ENCODE measurements at regions of chr7 and their contacts with region 1.

Region 1: GRCh38 chr7:156209084-156209483 is 396.8 kb upstream of the SHH start:
- DNase-seq: no peak
- H3K4me3 ChIP-seq: no peak overlapping the region
- H3K27ac ChIP-seq: no peak overlapping the region
- H3K4me1 ChIP-seq: no peaks in the 10 kb centered on the region
- H3K27me3 ChIP-seq: no peaks in the 10 kb centered on the region
- CTCF ChIP-seq: no peak
- POLR2A ChIP-seq: no peak

Region 2: DNA sequence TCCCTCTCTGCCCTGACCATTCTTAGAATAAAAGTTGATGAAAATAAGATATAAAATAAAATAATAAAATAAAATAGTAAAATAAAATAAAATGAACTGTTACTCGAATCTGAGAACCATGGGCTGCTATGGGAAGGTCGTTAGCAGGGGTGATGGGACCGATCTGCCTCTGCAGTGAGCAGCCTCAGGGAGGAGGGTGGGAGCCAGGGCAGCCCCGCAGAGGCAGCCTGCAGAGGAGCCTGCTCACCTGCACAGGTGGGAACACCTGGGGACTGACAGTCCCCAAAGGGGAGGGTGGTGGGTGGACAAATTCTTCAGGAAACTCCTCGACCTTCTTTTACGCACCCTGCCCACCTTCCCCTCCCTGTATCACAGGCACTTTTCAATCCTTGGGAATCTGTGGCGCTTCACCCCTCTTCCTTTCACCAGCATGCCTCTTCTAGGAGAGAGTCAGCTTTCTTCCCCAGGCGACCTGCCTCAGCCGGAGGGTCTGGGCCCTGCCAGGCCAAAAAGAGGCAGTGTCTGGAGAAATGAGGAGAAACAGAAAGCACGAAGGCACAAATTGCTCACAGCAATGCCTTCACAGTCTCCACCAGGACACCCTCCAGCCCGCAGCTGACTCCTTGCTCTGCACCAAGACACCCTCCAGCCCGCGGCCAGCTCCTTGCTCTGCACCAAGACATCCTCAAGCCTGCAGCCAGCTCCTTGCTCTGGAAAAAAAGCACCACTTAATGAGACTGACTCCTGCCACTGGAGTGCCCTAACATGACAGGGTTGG is 28.4 kb before region 1 on chr7:
- intact Hi-C with region 1: loop called (anchors 2 kb)
- DNase-seq: no peak
- H3K4me3 ChIP-seq: no peak overlapping the region
- H3K27ac ChIP-seq: no peak overlapping the region
- H3K4me1 ChIP-seq: no peaks in the 10 kb centered on the region
- H3K27me3 ChIP-seq: peaks cover 0 to 4% of the 10 kb centered on the region in 2 donors
- CTCF ChIP-seq: no peak
- POLR2A ChIP-seq: no peak